ENCODE measurements at regions of chr10 and their contacts with region 1.

Region 1: DNA sequence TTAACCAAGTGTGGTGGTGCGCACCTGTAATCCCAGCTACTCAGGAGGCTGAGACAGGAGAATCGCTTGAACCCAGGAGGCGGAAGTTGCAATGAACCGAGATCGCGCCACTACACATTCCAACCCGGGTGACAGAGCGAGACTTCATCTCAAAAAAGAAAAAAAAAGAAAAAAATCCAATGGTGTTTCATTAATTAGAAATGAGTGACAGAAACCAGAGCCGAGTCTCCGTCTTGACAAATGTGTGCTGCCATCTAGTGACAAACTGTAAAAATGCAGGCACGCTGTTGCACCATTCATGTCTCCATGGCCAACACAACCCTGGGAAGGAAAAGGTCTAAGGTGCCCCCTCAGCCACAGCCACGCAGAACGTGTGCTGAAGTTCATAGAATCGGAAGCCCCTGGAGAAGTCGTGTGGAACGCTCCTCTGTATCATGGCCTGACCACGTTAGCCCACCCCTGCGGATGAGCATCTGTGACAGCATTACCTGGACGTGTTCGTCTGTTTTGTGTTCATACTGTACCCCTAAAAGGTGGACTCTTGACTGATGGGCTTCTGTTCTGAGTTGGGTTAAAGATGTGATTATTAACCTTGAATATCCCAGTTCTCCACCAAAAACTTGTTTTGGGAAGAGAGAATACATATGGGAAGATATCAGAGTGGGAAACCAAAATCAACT is 94.9 kb downstream of the LYZL2 start:
- DNase-seq: peak; percentile 56 to 60
- H3K4me3 ChIP-seq: no peak overlapping the region
- H3K27ac ChIP-seq: no peak overlapping the region
- H3K4me1 ChIP-seq: no peaks in the 10 kb centered on the region
- H3K27me3 ChIP-seq: no peaks in the 10 kb centered on the region
- CTCF ChIP-seq: peak; percentile 86 to 94 (median 91)
- POLR2A ChIP-seq: no peak

Region 2: DNA sequence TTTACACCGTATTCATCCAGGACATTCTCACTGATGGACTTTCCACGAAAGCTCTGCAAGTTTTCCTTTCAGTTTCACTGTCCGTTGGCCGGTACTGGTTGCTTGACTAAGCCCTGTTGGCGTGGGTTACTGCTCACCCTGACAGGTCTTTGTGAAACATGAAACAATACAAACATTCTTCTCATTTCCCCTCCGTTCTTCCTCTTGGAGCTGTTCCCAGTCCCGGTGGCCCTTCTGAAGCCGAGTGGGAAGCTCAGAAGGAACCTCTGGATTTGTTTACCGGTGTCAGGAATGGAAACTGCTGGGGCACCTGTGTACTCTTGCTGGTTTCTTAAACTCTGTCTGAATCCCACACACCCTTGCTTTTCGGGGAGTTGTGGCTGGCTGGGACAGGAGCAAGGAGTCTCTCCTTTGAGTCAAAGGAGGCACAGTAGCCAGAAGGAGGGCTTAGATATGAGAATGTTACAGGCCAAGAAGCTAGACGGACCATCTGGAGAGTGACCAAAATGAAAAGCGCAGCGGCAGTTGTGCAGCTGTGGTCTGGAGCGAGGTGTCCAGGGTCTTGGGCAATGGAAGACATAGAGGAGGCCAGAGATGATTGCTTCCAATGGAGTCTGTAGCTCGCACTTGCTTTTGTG is 49.3 kb after region 1 on chr10:
- intact Hi-C with region 1: loop called (anchors 10 kb)
- DNase-seq: peak; percentile 83 to 85
- H3K4me3 ChIP-seq: peak overlapping the region; percentile 5 to 65 (median 48)
- H3K27ac ChIP-seq: peak overlapping the region; percentile 92 to 95
- H3K4me1 ChIP-seq: peaks cover 6 to 8% of the 10 kb centered on the region in 2 donors
- H3K27me3 ChIP-seq: no peaks in the 10 kb centered on the region
- CTCF ChIP-seq: no peak
- POLR2A ChIP-seq: no peak